ENCODE measurements at regions of chr2 and their contacts with region 1.

Region 1: GRCh38 chr2:70994756-70995729 is at the start of gene TEX261:
- DNase-seq: peak; percentile 81 to 97 (median 88)
- ATAC-seq: peak; percentile 98
- H3K4me3 ChIP-seq: peak within 1 kb of the TSS; percentile 92
- H3K4me3 Mint-ChIP-seq: peak within 1 kb of the TSS; percentile 95 to 100 (median 98)
- H3K27ac ChIP-seq: peak within 1 kb of the TSS; percentile 88
- H3K27ac Mint-ChIP-seq: peak within 1 kb of the TSS; percentile 88 to 99 (median 96)
- H3K4me1 ChIP-seq: peaks cover 19 to 21% of the 10 kb centered on the region in 2 donors
- H3K4me1 Mint-ChIP-seq: peaks cover 23 to 44% (median 36%) of the 10 kb centered on the region in 7 donors
- H3K27me3 ChIP-seq: no peaks in the 10 kb centered on the region
- H3K27me3 Mint-ChIP-seq: no peaks in the 10 kb centered on the region
- total RNA-seq, gene TEX261: 33.2 to 66.3 (median 56.4) TPM

Region 2: GRCh38 chr2:69893684-69894551 is 1101.1 kb before region 1 on chr2 and contains the start of gene SNRNP27:
- CTCF ChIA-PET with region 1: no interaction called
- POLR2A ChIA-PET with region 1: no interaction called
- intact Hi-C with region 1: loop called in 1 of 2 experiments (anchors 2 kb)
- DNase-seq: peak; percentile 62 to 84 (median 77)
- ATAC-seq: peak; percentile 90
- H3K4me3 ChIP-seq: peak within 1 kb of the TSS; percentile 67
- H3K4me3 Mint-ChIP-seq: peak within 1 kb of the TSS; percentile 90 to 100 (median 99)
- H3K27ac ChIP-seq: peak within 1 kb of the TSS; percentile 91
- H3K27ac Mint-ChIP-seq: peak within 1 kb of the TSS; percentile 93 to 100 (median 99)
- H3K4me1 ChIP-seq: peaks cover 12 to 17% of the 10 kb centered on the region in 2 donors
- H3K4me1 Mint-ChIP-seq: peaks cover 12 to 56% (median 43%) of the 10 kb centered on the region in 7 donors
- H3K27me3 ChIP-seq: no peaks in the 10 kb centered on the region
- H3K27me3 Mint-ChIP-seq: no peaks in the 10 kb centered on the region
- total RNA-seq, gene SNRNP27: 32.5 to 56.0 (median 51.5) TPM

Region 3: DNA sequence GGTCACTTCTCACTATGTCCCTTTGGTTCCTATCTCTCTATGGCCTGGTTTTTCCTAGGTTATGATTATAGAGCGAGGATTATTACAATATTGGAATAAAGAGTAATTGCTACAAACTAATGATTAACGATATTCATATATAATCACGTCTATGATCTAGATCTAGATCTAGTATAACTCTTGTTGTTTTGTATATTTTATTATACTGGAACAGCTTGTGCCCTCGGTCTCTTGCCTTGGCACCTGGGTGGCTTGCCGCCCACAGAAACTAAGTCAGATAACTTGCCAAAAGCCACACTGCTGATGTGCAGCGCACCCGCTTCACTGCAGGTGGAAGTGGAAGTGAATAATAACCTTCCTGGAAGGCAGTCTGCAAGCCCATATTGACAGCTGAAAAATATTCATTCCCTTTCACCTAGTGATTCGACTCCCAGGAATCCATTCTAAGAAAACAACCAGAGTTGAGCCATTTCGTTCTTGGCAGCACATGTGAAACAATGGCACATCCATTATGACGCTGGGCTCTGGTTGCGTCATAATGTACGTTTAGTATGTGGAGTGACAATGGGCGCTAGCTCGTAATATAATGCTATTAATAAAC is 17.3 kb before region 1 on chr2:
- CTCF ChIA-PET with region 1: no interaction called
- POLR2A ChIA-PET with region 1: interaction called, 3 read pairs
- intact Hi-C with region 1: loop called (anchors 2 kb)
- DNase-seq: peak in 5 of 9 donors; percentile 25 to 42 (median 29)
- ATAC-seq: peak; percentile 28
- H3K4me3 ChIP-seq: peak overlapping the region; percentile 81
- H3K4me3 Mint-ChIP-seq: peak overlapping the region; percentile 76 to 95 (median 86)
- H3K27ac ChIP-seq: peak overlapping the region; percentile 36
- H3K27ac Mint-ChIP-seq: peak overlapping the region; percentile 60 to 93 (median 83)
- H3K4me1 ChIP-seq: peaks cover 9% of the 10 kb centered on the region in 2 donors
- H3K4me1 Mint-ChIP-seq: peaks cover 8 to 23% (median 16%) of the 10 kb centered on the region in 7 donors
- H3K27me3 ChIP-seq: no peaks in the 10 kb centered on the region
- H3K27me3 Mint-ChIP-seq: peaks cover 0 to 22% (median 2%) of the 10 kb centered on the region in 5 donors

Region 4: GRCh38 chr2:70984576-70985282 is 10.3 kb before region 1 on chr2:
- CTCF ChIA-PET with region 1: interaction called, 5 read pairs
- POLR2A ChIA-PET with region 1: interaction called, 4 read pairs
- intact Hi-C with region 1: loop called (anchors 1 kb)
- DNase-seq: peak; percentile 71 to 86 (median 82)
- ATAC-seq: peak; percentile 100
- H3K4me3 ChIP-seq: no peak overlapping the region
- H3K4me3 Mint-ChIP-seq: peak overlapping the region in 8 of 10 donors; percentile 51 to 66 (median 57)
- H3K27ac ChIP-seq: peak overlapping the region; percentile 8
- H3K27ac Mint-ChIP-seq: peak overlapping the region in 6 of 9 donors; percentile 39 to 76 (median 45)
- H3K4me1 ChIP-seq: no peaks in the 10 kb centered on the region
- H3K4me1 Mint-ChIP-seq: peaks cover 7 to 22% (median 18%) of the 10 kb centered on the region in 7 donors
- H3K27me3 ChIP-seq: no peaks in the 10 kb centered on the region
- H3K27me3 Mint-ChIP-seq: no peaks in the 10 kb centered on the region

Region 5: GRCh38 chr2:71277536-71278103 is 282.6 kb after region 1 on chr2:
- CTCF ChIA-PET with region 1: no interaction called
- POLR2A ChIA-PET with region 1: no interaction called
- intact Hi-C with region 1: no loop called
- DNase-seq: peak in 2 of 9 donors; percentile 13 to 28
- ATAC-seq: peak; percentile 22
- H3K4me3 ChIP-seq: peak overlapping the region; percentile 67
- H3K4me3 Mint-ChIP-seq: peak overlapping the region; percentile 37 to 85 (median 76)
- H3K27ac ChIP-seq: no peak overlapping the region
- H3K27ac Mint-ChIP-seq: peak overlapping the region in 1 of 9 donors; percentile 39
- H3K4me1 ChIP-seq: peaks cover 4 to 16% of the 10 kb centered on the region in 2 donors
- H3K4me1 Mint-ChIP-seq: peaks cover 10 to 18% (median 13%) of the 10 kb centered on the region in 7 donors
- H3K27me3 ChIP-seq: peaks cover 11 to 15% of the 10 kb centered on the region in 2 donors
- H3K27me3 Mint-ChIP-seq: peaks cover 78 to 86% (median 85%) of the 10 kb centered on the region in 5 donors

Region 6: GRCh38 chr2:71372042-71372441 is 377.0 kb after region 1 on chr2:
- CTCF ChIA-PET with region 1: no interaction called
- POLR2A ChIA-PET with region 1: no interaction called
- intact Hi-C with region 1: no loop called
- DNase-seq: no peak
- ATAC-seq: no peak
- H3K4me3 ChIP-seq: no peak overlapping the region
- H3K4me3 Mint-ChIP-seq: no peak overlapping the region
- H3K27ac ChIP-seq: no peak overlapping the region
- H3K27ac Mint-ChIP-seq: peak overlapping the region in 3 of 9 donors; percentile 35 to 80 (median 50)
- H3K4me1 ChIP-seq: no peaks in the 10 kb centered on the region
- H3K4me1 Mint-ChIP-seq: peaks cover 2 to 41% (median 28%) of the 10 kb centered on the region in 7 donors
- H3K27me3 ChIP-seq: no peaks in the 10 kb centered on the region
- H3K27me3 Mint-ChIP-seq: no peaks in the 10 kb centered on the region

Measured in naive thymus-derived CD4-positive, alpha-beta T cell (primary cell).